Right ventricle myocardium inferior (tissue), 1 donor: ENCODE measurements at regions of chr9 and their contacts with region 1.

Region 1: DNA sequence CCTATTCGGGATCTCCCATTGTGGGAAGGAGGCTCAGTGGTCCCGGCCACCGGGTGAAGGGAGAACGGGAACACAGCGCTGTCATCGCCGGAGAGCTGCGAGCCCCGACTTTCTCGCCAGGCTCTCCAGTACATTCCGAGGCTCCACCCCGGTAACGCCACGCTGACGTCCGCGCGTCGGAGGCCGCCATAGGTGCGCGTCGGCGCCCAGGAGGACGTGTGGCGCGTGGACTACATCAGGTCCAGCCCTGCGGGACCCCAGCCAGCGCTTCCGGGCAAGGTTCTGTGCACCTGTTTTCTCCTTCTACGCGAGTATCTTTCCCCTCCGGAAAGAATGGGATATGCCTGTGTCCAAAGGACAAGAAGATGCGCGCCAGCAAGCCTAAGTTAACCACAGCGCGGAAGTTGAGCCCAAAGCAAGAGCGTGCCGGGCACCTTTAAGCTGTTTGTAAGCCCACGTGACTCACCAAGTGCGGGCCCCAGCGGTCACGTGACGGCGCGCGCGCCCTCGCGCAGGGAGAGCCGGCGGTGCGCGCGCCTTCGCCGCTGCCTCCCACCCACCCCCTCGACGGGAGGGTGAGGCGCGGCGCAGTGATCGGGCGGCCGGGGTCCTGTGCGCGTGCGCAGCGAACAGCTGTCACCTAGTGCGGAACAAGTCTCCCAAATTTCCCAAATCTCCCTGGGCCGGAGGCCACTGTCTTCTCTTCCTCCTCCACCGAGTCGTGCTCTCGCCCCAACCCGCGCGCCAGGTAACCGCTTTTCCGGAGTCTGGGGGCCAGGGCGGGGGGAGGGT is at the start of gene KDM4C:
- DNase-seq: peak; percentile 98
- ATAC-seq: peak; percentile 96
- total RNA-seq, gene KDM4C: 15.3 TPM

Region 2: GRCh38 chr9:5629312-5630080 is 1128.2 kb before region 1 on chr9:
- intact Hi-C with region 1: loop called (anchors 10 kb)
- DNase-seq: peak; percentile 82
- ATAC-seq: peak; percentile 9

Region 3: GRCh38 chr9:6412487-6413364 is 344.9 kb before region 1 on chr9 and contains the start of gene UHRF2:
- intact Hi-C with region 1: loop called (anchors 10 kb)
- DNase-seq: peak; percentile 100
- ATAC-seq: peak; percentile 98
- total RNA-seq, gene UHRF2: 16.0 TPM

Region 4: DNA sequence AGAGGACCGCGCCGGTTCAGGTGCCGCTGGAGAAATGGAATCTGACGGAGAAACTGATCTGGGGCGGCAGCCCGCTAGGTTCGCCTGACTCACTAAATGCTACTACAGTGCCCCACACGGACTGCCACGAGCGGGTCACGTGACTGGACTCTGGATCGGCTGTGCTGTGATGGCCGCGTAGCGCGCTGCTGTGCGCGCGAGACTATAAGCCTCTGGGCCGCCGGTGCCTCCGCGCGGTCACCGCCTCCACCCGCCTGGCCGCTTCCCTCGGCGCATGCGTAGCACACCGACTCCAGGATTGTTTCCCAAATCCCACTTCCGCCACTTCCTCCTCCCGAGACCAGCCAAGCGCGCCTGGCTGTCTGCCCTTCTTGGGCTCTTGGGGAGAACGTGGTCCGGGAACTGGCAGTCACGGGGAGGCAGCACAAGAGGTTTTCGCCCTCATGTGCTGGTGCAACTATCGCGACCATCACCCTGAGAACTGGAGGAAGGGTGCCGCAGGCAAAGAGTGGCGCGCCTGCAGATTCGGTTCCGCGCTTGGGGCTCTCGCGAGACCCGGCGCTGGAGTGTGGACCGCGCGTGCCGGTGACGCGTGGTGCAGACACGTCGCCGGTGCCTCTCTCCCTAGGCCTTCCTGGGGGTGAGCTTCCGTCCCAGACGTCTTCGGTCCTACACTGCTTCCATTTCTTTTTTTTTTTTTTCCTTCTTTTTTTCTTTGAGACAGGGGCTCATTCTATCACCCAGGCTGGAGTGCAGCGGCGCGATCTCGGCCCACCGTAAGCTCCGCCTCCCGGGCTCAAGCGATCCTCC is 76.3 kb before region 1 on chr9:
- intact Hi-C with region 1: loop called (anchors 1 kb)
- DNase-seq: peak; percentile 98
- ATAC-seq: peak; percentile 99

Region 5: DNA sequence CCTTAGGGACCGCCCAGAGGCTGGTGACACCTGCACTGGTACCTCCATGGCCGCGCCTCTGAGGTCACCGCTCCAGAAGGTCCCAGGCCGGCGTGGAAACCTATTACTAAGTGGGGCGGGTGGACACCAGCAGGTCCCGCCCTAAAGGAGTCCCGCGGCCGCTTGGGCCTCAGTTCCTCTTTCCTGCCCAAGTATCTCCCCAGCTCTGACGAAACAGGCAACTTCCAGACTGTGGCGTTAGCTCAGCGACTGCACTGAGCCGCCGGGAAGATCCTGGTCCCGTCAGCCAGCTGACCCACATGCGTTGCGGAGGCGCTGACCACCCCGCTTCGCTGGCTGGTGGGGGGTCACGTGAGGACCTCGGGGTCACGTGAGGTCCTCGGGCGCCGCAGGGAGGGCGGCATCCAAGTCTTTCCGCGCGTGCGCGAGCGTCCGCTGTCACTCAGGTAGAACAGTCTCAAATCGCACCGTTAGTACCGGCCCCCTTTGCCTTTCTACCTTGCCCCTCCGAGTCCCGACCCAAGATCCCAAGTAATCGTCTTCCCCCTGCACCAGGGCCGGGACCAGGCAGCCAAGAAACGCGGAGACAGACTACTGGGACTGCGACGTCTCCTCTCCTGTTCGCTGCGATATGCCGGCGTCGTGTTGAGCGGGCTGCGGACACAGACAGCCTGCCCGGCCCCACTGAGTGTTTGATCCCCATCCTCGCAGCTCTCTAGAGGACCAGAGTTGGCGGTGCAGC is 53.6 kb before region 1 on chr9:
- intact Hi-C with region 1: loop called (anchors 5 kb)
- DNase-seq: peak; percentile 94
- ATAC-seq: peak; percentile 95